Naive thymus-derived CD4-positive, alpha-beta T cell (primary cell): ENCODE measurements at regions of chr7 and their contacts with region 1.

Region 1: DNA sequence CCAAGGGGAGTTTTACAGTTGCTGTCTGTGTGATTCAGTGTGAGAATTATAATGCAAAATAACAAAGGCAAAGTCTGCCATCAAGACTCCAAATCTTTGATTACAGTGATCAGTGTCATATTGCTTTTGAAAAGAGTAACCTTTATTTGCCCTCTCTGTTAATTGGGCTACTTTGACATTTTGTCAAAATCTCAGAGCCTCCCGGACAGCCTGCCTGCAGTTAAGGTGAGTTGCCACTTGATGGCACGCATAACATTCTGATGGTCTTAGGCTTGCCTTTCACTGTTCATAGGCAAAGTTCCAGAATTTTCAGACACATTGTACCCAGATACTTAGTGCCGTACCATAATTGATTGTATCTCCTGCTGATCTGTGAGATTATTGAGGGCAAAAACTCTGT is 253.5 kb downstream of the ABCA13 start:
- DNase-seq: no peak
- ATAC-seq: no peak
- H3K4me3 ChIP-seq: no peak overlapping the region
- H3K4me3 Mint-ChIP-seq: no peak overlapping the region
- H3K27ac ChIP-seq: no peak overlapping the region
- H3K27ac Mint-ChIP-seq: no peak overlapping the region
- H3K4me1 ChIP-seq: no peaks in the 10 kb centered on the region
- H3K4me1 Mint-ChIP-seq: peaks cover 0 to 5% (median 0%) of the 10 kb centered on the region in 7 donors
- H3K27me3 ChIP-seq: no peaks in the 10 kb centered on the region
- H3K27me3 Mint-ChIP-seq: peaks cover 0 to 6% (median 0%) of the 10 kb centered on the region in 5 donors

Region 2: DNA sequence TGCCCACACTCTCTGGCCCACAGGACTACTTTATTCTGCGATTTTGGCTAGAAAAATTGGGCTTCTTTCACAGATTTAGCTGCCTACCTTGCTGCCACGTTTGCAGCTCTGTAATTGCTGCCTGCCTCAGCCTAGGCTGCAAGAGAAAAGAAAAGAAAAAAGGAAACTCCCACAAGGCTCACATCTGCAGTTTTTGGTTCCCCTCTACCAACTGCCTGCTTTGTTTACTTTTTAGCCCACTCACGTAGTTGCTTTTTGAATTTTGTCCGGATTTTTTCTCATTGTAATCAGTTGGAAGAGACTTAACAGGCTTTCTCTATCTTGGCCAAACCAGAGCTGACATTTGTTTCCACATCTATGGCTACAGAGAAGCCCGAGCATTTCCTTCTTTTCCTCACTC is 420.1 kb before region 1 on chr7:
- CTCF ChIA-PET with region 1: no interaction called
- POLR2A ChIA-PET with region 1: no interaction called
- intact Hi-C with region 1: loop called in 1 of 2 experiments (anchors 5 kb)
- DNase-seq: no peak
- ATAC-seq: no peak
- H3K4me3 ChIP-seq: no peak overlapping the region
- H3K4me3 Mint-ChIP-seq: no peak overlapping the region
- H3K27ac ChIP-seq: no peak overlapping the region
- H3K27ac Mint-ChIP-seq: no peak overlapping the region
- H3K4me1 ChIP-seq: no peaks in the 10 kb centered on the region
- H3K4me1 Mint-ChIP-seq: no peaks in the 10 kb centered on the region
- H3K27me3 ChIP-seq: no peaks in the 10 kb centered on the region
- H3K27me3 Mint-ChIP-seq: peaks cover 0 to 24% (median 4%) of the 10 kb centered on the region in 5 donors

Region 3: DNA sequence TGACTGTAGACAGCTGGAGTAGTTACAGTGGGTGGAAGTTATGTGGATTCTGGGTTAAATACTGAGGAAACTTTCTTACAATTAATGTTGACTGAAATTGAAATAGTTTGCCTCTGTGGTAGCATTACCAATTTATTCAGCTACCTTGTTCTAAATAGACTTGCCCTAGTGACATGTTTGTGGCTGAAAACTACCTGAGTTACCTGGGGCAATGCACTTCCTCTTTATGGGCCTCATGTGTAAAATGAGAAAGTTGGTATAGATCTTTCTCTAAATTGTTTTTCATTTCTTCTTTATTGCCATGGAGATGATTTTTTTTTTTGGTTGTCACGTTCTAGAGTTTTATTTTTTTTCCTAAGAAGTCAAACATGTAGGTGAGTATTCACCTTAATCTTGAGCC is 246.9 kb after region 1 on chr7:
- CTCF ChIA-PET with region 1: no interaction called
- POLR2A ChIA-PET with region 1: no interaction called
- intact Hi-C with region 1: no loop called
- DNase-seq: no peak
- ATAC-seq: no peak
- H3K4me3 ChIP-seq: no peak overlapping the region
- H3K4me3 Mint-ChIP-seq: no peak overlapping the region
- H3K27ac ChIP-seq: no peak overlapping the region
- H3K27ac Mint-ChIP-seq: no peak overlapping the region
- H3K4me1 ChIP-seq: no peaks in the 10 kb centered on the region
- H3K4me1 Mint-ChIP-seq: no peaks in the 10 kb centered on the region
- H3K27me3 ChIP-seq: no peaks in the 10 kb centered on the region
- H3K27me3 Mint-ChIP-seq: no peaks in the 10 kb centered on the region